Activated CD8-positive, alpha-beta memory T cell treated with anti-CD3 and anti-CD28 coated beads, Interleukin-2, amount 10 ng/mL, durations not matched to agents 7 days and 5 days (primary cell): ENCODE measurements at regions of chr6 and their contacts with region 1.

Region 1: GRCh38 chr6:106181664-106182418 is 95.7 kb downstream of the PRDM1 start:
- DNase-seq: no peak
- ATAC-seq: peak; percentile 43
- H3K4me3 Mint-ChIP-seq: peak overlapping the region; percentile 0
- H3K27ac Mint-ChIP-seq: peak overlapping the region; percentile 67
- H3K4me1 Mint-ChIP-seq: peaks cover 52% of the 10 kb centered on the region
- H3K27me3 Mint-ChIP-seq: no peaks in the 10 kb centered on the region

Region 2: GRCh38 chr6:106072501-106073090 is 109.2 kb before region 1 on chr6:
- CTCF ChIA-PET with region 1: no interaction called
- DNase-seq: no peak
- ATAC-seq: no peak
- H3K4me3 Mint-ChIP-seq: no peak overlapping the region
- H3K27ac Mint-ChIP-seq: no peak overlapping the region
- H3K4me1 Mint-ChIP-seq: no peaks in the 10 kb centered on the region
- H3K27me3 Mint-ChIP-seq: peaks cover 2% of the 10 kb centered on the region

Region 3: DNA sequence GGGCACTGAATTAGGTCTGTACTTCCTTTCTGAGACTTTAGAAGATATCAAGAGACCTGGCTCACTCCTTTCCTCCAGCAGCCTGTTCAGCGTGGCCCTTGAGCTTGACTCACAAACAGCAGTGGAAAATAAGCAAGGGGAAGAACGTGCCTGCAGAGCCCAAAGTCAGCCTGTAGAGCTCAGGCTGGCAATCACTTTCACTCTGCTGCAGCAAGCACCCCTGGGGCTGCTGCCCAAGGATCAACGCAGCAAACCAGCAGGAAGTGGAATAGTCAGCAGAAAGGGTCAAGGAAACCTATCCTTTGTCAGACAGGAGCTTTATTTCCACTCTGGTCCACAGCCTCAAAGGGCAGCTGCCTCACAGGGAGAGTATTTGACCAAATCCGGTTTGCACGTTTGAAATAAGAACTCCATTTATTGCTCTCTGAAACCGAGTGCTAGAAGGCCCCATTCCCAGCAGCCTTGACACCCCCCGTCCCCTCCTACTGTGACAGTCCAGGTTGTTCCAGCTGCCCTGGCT is 18.3 kb before region 1 on chr6:
- CTCF ChIA-PET with region 1: interaction called, 27 read pairs
- DNase-seq: peak; percentile 87
- ATAC-seq: peak; percentile 62
- H3K4me3 Mint-ChIP-seq: peak overlapping the region; percentile 72
- H3K27ac Mint-ChIP-seq: peak overlapping the region; percentile 99
- H3K4me1 Mint-ChIP-seq: peaks cover 84% of the 10 kb centered on the region
- H3K27me3 Mint-ChIP-seq: no peaks in the 10 kb centered on the region